ENCODE measurements at regions of chr1 and their contacts with region 1.

Region 1: DNA sequence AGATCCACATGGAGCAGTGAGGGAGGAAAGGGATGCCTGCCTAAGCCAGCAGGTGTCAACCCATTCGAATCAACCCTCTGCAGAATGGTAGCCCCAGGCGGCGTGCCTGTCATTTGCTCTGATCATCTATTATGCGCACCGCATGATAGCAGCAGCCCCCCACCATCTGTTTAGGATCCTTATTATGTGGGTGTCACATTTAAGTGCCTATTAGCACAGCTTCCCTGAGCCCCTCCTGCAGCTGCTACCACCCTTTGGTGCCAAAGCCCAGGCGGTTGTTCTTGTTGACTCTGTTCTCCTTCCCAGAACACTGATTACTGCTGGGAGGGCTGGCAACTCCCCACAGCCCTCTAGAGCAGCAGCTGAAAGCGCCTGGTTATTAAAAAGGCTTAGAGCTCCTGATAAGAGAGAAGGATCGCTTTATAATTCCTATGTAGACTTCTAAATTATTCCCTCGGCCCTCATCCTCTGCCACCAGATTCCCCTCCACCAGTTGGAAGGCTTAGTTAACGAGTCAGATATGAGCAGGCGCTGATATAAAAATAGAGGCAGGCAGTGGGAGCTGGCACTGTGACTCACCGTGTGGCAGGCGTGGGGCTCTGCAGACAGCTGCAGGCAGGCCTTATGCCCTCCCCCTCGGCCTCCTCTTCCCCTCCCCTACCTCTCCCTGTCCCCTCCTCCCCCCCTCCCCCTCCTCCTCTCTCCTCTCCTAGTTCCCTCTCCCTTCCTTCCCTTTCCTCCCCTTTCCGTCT is 23.0 kb downstream of the ACTA1 start:
- DNase-seq: peak; percentile 81 to 94
- ATAC-seq: peak; percentile 75 to 80 (median 78)
- H3K4me3 ChIP-seq: peak overlapping the region; percentile 51
- H3K27ac ChIP-seq: peak overlapping the region; percentile 95
- H3K4me1 ChIP-seq: peaks cover 47% of the 10 kb centered on the region
- H3K27me3 ChIP-seq: peaks cover 0 to 4% (median 0%) of the 10 kb centered on the region in 3 donors
- CTCF ChIP-seq: no peak

Region 2: DNA sequence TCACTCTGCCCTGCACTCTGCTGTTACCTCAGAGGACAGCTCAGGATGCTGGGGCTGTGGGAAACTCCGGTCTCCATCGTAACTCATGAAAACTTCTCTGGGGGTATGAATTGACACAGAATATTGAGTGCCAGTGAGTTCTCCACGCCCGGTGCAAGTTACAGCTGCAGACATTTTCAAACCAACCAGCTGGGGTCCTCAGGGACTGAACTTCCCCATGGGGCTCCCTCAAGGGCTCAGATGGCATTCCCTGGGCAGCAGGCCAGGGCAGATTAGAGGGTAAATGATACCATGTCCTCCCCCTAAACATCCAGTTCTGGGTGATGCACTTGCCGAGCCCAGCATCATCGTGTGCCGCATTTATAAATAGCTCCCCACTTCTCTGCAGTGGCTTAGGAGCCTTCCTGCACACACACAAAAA is 40.3 kb before region 1 on chr1:
- intact Hi-C with region 1: loop called (anchors 1 to 5 kb)
- DNase-seq: peak; percentile 76 to 92
- ATAC-seq: peak; percentile 88 to 97 (median 96)
- H3K4me3 ChIP-seq: no peak overlapping the region
- H3K27ac ChIP-seq: peak overlapping the region; percentile 1
- H3K4me1 ChIP-seq: peaks cover 18% of the 10 kb centered on the region
- H3K27me3 ChIP-seq: no peaks in the 10 kb centered on the region
- CTCF ChIP-seq: peak; percentile 17

Region 3: GRCh38 chr1:229430761-229431283 is 20.0 kb after region 1 on chr1:
- intact Hi-C with region 1: loop called in 1 of 2 experiments (anchors 1 kb)
- DNase-seq: peak; percentile 83 to 94
- ATAC-seq: peak; percentile 31 to 70 (median 55)
- H3K4me3 ChIP-seq: peak overlapping the region; percentile 70
- H3K27ac ChIP-seq: peak overlapping the region; percentile 97
- H3K4me1 ChIP-seq: peaks cover 22% of the 10 kb centered on the region
- H3K27me3 ChIP-seq: peaks cover 0 to 20% (median 0%) of the 10 kb centered on the region in 3 donors
- CTCF ChIP-seq: no peak

Region 4: GRCh38 chr1:229440851-229441537 is 30.1 kb after region 1 on chr1:
- intact Hi-C with region 1: loop called in 1 of 2 experiments (anchors 5 kb)
- DNase-seq: no peak
- ATAC-seq: peak; percentile 28 to 56 (median 47)
- H3K4me3 ChIP-seq: no peak overlapping the region
- H3K27ac ChIP-seq: peak overlapping the region; percentile 85
- H3K4me1 ChIP-seq: peaks cover 45% of the 10 kb centered on the region
- H3K27me3 ChIP-seq: no peaks in the 10 kb centered on the region
- CTCF ChIP-seq: no peak